ENCODE measurements at regions of chr1 and their contacts with region 1.

Region 1: DNA sequence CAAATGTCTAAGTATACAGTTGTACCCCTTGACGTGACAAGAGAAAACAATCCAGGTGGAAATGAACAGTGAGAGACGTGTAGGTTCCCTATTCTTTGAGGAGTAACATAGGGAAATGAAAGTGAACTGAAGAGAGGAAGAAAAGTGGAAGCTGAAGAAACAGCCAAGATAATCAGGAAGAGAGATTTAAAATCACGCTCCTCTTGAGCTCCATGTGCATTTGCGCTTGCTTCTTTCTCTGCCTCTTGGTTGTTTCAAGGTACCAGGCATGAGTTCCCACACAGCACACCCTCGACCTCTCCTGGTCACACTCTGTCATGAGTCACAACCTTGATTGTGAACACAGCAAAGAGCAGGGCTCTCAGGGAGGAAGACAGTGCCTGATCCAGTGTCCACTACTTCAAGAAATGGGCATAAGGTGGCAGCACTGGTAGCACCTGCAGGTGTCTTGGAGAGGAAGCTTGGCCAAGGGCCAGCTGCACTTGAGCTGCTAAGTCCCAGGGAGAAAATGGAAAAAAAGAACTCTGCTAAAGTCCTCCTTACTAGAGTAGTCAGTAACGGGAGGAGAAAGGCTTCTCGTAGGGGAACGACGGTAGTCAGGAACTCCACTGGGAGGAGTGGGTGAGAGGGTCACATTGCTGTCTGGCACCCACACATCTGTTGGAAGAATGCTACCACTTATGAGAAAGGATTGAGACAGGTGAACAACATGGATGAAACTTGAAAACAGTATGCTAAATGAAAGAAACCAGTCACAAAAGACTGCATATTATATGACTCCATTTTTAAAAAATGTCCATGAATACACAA is 18.3 kb upstream of the ARID1A start:
- DNase-seq: peak; percentile 34
- H3K4me3 Mint-ChIP-seq: no peak overlapping the region
- H3K27ac Mint-ChIP-seq: no peak overlapping the region
- H3K4me1 Mint-ChIP-seq: peaks cover 16% of the 10 kb centered on the region
- H3K27me3 Mint-ChIP-seq: no peaks in the 10 kb centered on the region

Region 2: GRCh38 chr1:26695356-26696118 is 18.0 kb after region 1 on chr1 and contains the start of gene ARID1A:
- intact Hi-C with region 1: loop called (anchors 2 kb)
- DNase-seq: peak; percentile 97
- H3K4me3 Mint-ChIP-seq: peak within 1 kb of the TSS; percentile 88
- H3K27ac Mint-ChIP-seq: peak within 1 kb of the TSS; percentile 98
- H3K4me1 Mint-ChIP-seq: peaks cover 27% of the 10 kb centered on the region
- H3K27me3 Mint-ChIP-seq: no peaks in the 10 kb centered on the region
- total RNA-seq, gene ARID1A: 109 TPM in 2 replicates

Measured in activated T-helper 2 cell treated with anti-CD3 and anti-CD28 coated beads, Interferon-gamma antibody, Interleukin-2, Interleukin-4, amounts not matched to agents 10 μg/mL and 5 μg/mL and 100 μg/mL, durations not matched to agents 14 hours and 24 hours and 36 hours (primary cell).